ENCODE measurements at regions of chr9 and their contacts with region 1.

Region 1: GRCh38 chr9:13598738-13599137 is 319.2 kb upstream of the MPDZ start:
- DNase-seq: no peak
- H3K4me3 ChIP-seq: no peak overlapping the region
- H3K4me3 Mint-ChIP-seq: no peak overlapping the region
- H3K27ac ChIP-seq: no peak overlapping the region
- H3K27ac Mint-ChIP-seq: no peak overlapping the region
- H3K4me1 ChIP-seq: no peaks in the 10 kb centered on the region
- H3K4me1 Mint-ChIP-seq: no peaks in the 10 kb centered on the region
- H3K27me3 ChIP-seq: no peaks in the 10 kb centered on the region
- H3K27me3 Mint-ChIP-seq: no peaks in the 10 kb centered on the region

Region 2: GRCh38 chr9:13651969-13652663 is 53.4 kb after region 1 on chr9:
- CTCF ChIA-PET with region 1: no interaction called
- POLR2A ChIA-PET with region 1: no interaction called
- intact Hi-C with region 1: loop called (anchors 10 kb)
- DNase-seq: no peak
- H3K4me3 ChIP-seq: no peak overlapping the region
- H3K4me3 Mint-ChIP-seq: no peak overlapping the region
- H3K27ac ChIP-seq: no peak overlapping the region
- H3K27ac Mint-ChIP-seq: no peak overlapping the region
- H3K4me1 ChIP-seq: no peaks in the 10 kb centered on the region
- H3K4me1 Mint-ChIP-seq: no peaks in the 10 kb centered on the region
- H3K27me3 ChIP-seq: no peaks in the 10 kb centered on the region
- H3K27me3 Mint-ChIP-seq: no peaks in the 10 kb centered on the region

Measured in CD4-positive, alpha-beta memory T cell (primary cell).